Ascending aorta (tissue), 2 donors: ENCODE measurements at regions of chr7 and their contacts with region 1.

Region 1: GRCh38 chr7:144408121-144408520 is 4.6 kb upstream of the NOBOX start:
- DNase-seq: no peak
- H3K4me3 ChIP-seq: no peak overlapping the region
- H3K27ac ChIP-seq: no peak overlapping the region
- H3K4me1 ChIP-seq: no peaks in the 10 kb centered on the region
- H3K27me3 ChIP-seq: no peaks in the 10 kb centered on the region
- CTCF ChIP-seq: no peak

Region 2: GRCh38 chr7:144428432-144428831 is 20.3 kb after region 1 on chr7:
- intact Hi-C with region 1: loop called (anchors 2 kb)
- DNase-seq: no peak
- H3K4me3 ChIP-seq: no peak overlapping the region
- H3K27ac ChIP-seq: no peak overlapping the region
- H3K4me1 ChIP-seq: no peaks in the 10 kb centered on the region
- H3K27me3 ChIP-seq: no peaks in the 10 kb centered on the region
- CTCF ChIP-seq: no peak